ENCODE measurements at regions of chr22 and their contacts with region 1.

Region 1: GRCh38 chr22:30044369-30044768 is 35.9 kb upstream of the HORMAD2 start:
- DNase-seq: no peak
- ATAC-seq: peak; percentile 90

Region 2: GRCh38 chr22:28882878-28883656 is 1161.3 kb before region 1 on chr22 and contains the start of gene ZNRF3:
- intact Hi-C with region 1: loop called (anchors 5 kb)
- DNase-seq: peak; percentile 97
- ATAC-seq: peak; percentile 98
- total RNA-seq, gene ZNRF3: 12.9 TPM